ENCODE measurements at regions of chr20 and their contacts with region 1.

Region 1: GRCh38 chr20:33443512-33444239 is at the start of gene SNTA1:
- DNase-seq: peak; percentile 70 to 92 (median 83)
- H3K4me3 ChIP-seq: peak within 1 kb of the TSS; percentile 87
- H3K4me3 Mint-ChIP-seq: peak within 1 kb of the TSS; percentile 89 to 96 (median 93)
- H3K27ac ChIP-seq: peak within 1 kb of the TSS; percentile 65
- H3K27ac Mint-ChIP-seq: peak within 1 kb of the TSS; percentile 88 to 98 (median 94)
- H3K4me1 ChIP-seq: peaks cover 19% of the 10 kb centered on the region
- H3K4me1 Mint-ChIP-seq: peaks cover 17 to 26% (median 19%) of the 10 kb centered on the region in 3 donors
- H3K27me3 ChIP-seq: no peaks in the 10 kb centered on the region
- H3K27me3 Mint-ChIP-seq: peaks cover 0 to 1% of the 10 kb centered on the region in 2 donors
- total RNA-seq, gene SNTA1: 4.6 to 5.6 TPM

Region 2: GRCh38 chr20:33401184-33401920 is 42.3 kb before region 1 on chr20 and contains the start of gene CDK5RAP1:
- CTCF ChIA-PET with region 1: no interaction called
- POLR2A ChIA-PET with region 1: interaction called, 11 read pairs
- DNase-seq: peak; percentile 73 to 90 (median 79)
- H3K4me3 ChIP-seq: peak within 1 kb of the TSS; percentile 76
- H3K4me3 Mint-ChIP-seq: peak within 1 kb of the TSS; percentile 90 to 97 (median 95)
- H3K27ac ChIP-seq: peak within 1 kb of the TSS; percentile 73
- H3K27ac Mint-ChIP-seq: peak within 1 kb of the TSS; percentile 58 to 96 (median 92)
- H3K4me1 ChIP-seq: peaks cover 25% of the 10 kb centered on the region
- H3K4me1 Mint-ChIP-seq: peaks cover 54 to 68% (median 65%) of the 10 kb centered on the region in 3 donors
- H3K27me3 ChIP-seq: no peaks in the 10 kb centered on the region
- H3K27me3 Mint-ChIP-seq: no peaks in the 10 kb centered on the region
- total RNA-seq, gene CDK5RAP1: 41.6 to 46.4 TPM

Region 3: GRCh38 chr20:33489495-33490022 is 45.9 kb after region 1 on chr20:
- CTCF ChIA-PET with region 1: no interaction called
- POLR2A ChIA-PET with region 1: interaction called, 14 read pairs
- DNase-seq: peak; percentile 99
- H3K4me3 ChIP-seq: peak overlapping the region; percentile 68
- H3K4me3 Mint-ChIP-seq: peak overlapping the region; percentile 83 to 95 (median 91)
- H3K27ac ChIP-seq: peak overlapping the region; percentile 88
- H3K27ac Mint-ChIP-seq: peak overlapping the region; percentile 91 to 97 (median 94)
- H3K4me1 ChIP-seq: peaks cover 10% of the 10 kb centered on the region
- H3K4me1 Mint-ChIP-seq: peaks cover 13 to 34% (median 19%) of the 10 kb centered on the region in 3 donors
- H3K27me3 ChIP-seq: no peaks in the 10 kb centered on the region
- H3K27me3 Mint-ChIP-seq: peaks cover 0 to 2% of the 10 kb centered on the region in 2 donors

Measured in CD8-positive, alpha-beta memory T cell (primary cell).